Posterior vena cava (tissue), 2 donors: ENCODE measurements at regions of chr3 and their contacts with region 1.

Region 1: GRCh38 chr3:47315069-47315647 is 32.4 kb downstream of the KLHL18 start:
- DNase-seq: no peak

Region 2: GRCh38 chr3:47339951-47340350 is 24.8 kb after region 1 on chr3:
- intact Hi-C with region 1: loop called in 1 of 2 experiments (anchors 1 kb)
- DNase-seq: no peak

Region 3: GRCh38 chr3:47362701-47363100 is 47.5 kb after region 1 on chr3:
- intact Hi-C with region 1: no loop called
- DNase-seq: peak; percentile 5

Region 4: GRCh38 chr3:47385796-47386195 is 70.6 kb after region 1 on chr3:
- intact Hi-C with region 1: loop called in 1 of 2 experiments (anchors 2 kb)
- DNase-seq: no peak

Region 5: DNA sequence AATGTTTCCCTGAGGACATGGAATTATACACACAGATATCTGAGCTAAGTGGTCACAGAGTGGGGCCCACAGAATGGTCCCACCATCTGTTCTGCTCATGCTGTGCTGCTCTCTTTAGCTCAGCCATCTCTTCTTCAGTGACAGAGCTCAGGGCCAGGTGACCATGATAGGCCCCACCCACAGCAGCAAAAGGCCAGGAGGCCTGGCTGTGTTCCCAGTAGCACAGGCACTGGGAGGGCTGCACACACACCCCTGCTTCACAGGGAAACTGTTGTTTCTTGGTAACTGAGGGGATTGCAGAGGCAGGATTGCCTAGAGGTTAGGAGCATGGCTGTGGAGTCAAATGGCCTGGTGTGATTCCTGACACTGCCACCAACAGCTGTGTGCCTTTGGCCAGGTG is 1052.0 kb after region 1 on chr3:
- intact Hi-C with region 1: loop called in 1 of 2 experiments (anchors 5 kb)
- DNase-seq: no peak